ENCODE measurements at regions of chr1 and their contacts with region 1.

Region 1: DNA sequence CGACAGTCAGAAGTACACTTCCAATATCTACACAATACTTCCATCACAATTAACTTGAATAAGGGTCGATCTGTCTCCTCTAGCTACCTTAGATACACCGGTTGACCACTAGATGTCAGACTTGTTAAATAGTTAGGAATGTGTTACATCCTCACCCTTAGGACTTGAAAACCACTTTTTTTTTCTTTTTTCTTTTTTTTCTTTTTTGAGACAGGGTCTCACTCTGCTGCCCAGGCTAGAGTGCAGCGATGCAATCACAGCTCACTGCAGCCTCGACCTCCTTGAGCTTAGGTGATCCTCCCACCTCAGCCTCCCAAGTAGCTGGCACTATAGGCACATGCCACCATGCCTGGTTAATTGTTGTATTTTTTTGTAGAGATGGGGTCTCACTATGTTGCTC is 120.4 kb upstream of the GREM2 start:
- DNase-seq: no peak
- H3K4me3 ChIP-seq: no peak overlapping the region
- H3K27ac ChIP-seq: no peak overlapping the region
- H3K4me1 ChIP-seq: no peaks in the 10 kb centered on the region
- H3K27me3 ChIP-seq: no peaks in the 10 kb centered on the region
- CTCF ChIP-seq: peak; percentile 60

Region 2: DNA sequence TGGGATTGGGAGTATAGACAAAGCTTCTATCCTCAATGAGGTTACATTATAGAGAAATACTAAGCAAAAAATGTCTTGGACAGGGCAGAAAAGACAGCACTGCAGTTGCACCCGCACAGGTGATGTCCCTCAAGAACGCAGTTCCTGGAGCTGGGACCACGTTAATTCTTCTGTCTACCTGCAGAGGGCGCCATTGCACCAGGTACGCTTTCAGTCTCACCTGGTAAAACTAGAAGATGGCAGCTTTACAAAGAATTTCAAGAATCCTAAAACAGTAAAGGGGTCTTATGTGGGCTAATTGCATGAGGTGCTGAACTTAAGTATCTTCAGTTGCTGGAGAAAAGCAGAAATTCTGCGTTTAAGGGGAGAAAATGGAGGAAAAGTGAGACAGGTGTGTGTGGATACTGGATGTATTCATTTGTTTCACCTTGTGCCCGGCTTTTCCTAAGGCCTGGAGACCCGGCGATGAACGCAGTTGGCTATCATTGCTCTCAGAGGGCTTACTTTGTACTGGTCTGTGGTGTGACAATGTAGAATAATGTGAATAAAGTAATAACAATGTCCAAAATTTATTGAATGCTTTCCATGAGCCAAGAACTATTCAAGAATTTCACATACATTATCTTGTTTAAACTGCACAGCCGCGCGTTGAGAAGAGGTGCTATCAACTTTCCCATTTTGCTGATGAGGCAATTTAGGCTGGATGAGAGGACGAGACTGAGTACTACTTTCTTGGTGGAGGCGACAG is 155.8 kb after region 1 on chr1:
- intact Hi-C with region 1: loop called (anchors 5 kb)
- DNase-seq: peak; percentile 64
- H3K4me3 ChIP-seq: no peak overlapping the region
- H3K27ac ChIP-seq: no peak overlapping the region
- H3K4me1 ChIP-seq: no peaks in the 10 kb centered on the region
- H3K27me3 ChIP-seq: no peaks in the 10 kb centered on the region
- CTCF ChIP-seq: peak; percentile 65

Region 3: GRCh38 chr1:240946926-240947325 is 214.5 kb after region 1 on chr1:
- intact Hi-C with region 1: loop called (anchors 5 kb)
- DNase-seq: peak; percentile 61
- H3K4me3 ChIP-seq: no peak overlapping the region
- H3K27ac ChIP-seq: no peak overlapping the region
- H3K4me1 ChIP-seq: no peaks in the 10 kb centered on the region
- H3K27me3 ChIP-seq: no peaks in the 10 kb centered on the region
- CTCF ChIP-seq: peak; percentile 52

Region 4: GRCh38 chr1:241499910-241500309 is 767.5 kb after region 1 on chr1:
- intact Hi-C with region 1: loop called (anchors 5 kb)
- DNase-seq: no peak
- H3K4me3 ChIP-seq: no peak overlapping the region
- H3K27ac ChIP-seq: no peak overlapping the region
- H3K4me1 ChIP-seq: no peaks in the 10 kb centered on the region
- H3K27me3 ChIP-seq: no peaks in the 10 kb centered on the region
- CTCF ChIP-seq: no peak

Measured in colonic mucosa (tissue), 4 donors.